ENCODE measurements at regions of chr1 and their contacts with region 1.

Region 1: DNA sequence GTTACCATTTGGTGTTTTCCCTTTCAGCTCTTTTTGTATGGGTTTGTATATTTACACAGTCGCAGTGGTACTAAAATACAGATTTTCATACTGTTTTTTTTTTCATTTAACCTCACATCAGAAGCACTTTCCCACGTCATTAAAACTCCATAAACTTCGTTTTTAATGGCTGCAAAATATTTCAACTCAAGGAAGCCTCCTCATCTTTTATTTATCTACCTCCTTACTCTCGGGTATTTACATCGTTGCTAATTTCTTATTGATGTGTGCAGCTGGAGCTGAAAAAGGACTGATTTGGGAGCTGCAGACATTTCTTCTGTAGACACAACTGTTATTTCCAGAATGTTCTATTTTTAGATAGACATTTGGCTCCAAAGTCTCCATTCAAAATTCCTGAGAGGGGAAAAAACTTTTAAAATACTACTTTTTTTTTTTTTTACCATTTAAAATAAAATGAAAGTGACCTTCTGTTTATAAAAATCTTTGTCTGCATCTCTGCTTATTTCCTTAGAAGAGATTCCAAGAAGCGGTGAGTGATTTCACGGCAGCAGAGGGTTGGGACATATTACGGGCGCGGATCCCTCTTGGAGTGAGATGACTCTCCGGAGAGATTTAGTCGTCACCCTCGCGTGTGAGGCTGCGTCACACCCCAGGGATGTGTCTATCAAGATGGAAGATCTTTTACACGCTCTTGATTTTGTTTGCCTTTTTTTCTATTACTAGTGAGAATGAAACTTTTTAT is 10.1 kb downstream of the RUNX3 start:
- DNase-seq: peak; percentile 32
- H3K4me3 Mint-ChIP-seq: no peak overlapping the region
- H3K27ac Mint-ChIP-seq: peak overlapping the region; percentile 94
- H3K4me1 Mint-ChIP-seq: peaks cover 40% of the 10 kb centered on the region
- H3K27me3 Mint-ChIP-seq: no peaks in the 10 kb centered on the region

Region 2: GRCh38 chr1:24888971-24889676 is 30.8 kb before region 1 on chr1:
- intact Hi-C with region 1: no loop called
- DNase-seq: no peak
- H3K4me3 Mint-ChIP-seq: no peak overlapping the region
- H3K27ac Mint-ChIP-seq: no peak overlapping the region
- H3K4me1 Mint-ChIP-seq: no peaks in the 10 kb centered on the region
- H3K27me3 Mint-ChIP-seq: peaks cover 20% of the 10 kb centered on the region

Region 3: GRCh38 chr1:25099343-25099951 is 179.5 kb after region 1 on chr1:
- intact Hi-C with region 1: loop called (anchors 2 kb)
- DNase-seq: peak; percentile 36
- H3K4me3 Mint-ChIP-seq: peak overlapping the region; percentile 68
- H3K27ac Mint-ChIP-seq: peak overlapping the region; percentile 67
- H3K4me1 Mint-ChIP-seq: peaks cover 66% of the 10 kb centered on the region
- H3K27me3 Mint-ChIP-seq: peaks cover 5% of the 10 kb centered on the region

Measured in activated T-helper 2 cell treated with anti-CD3 and anti-CD28 coated beads, Interferon-gamma antibody, Interleukin-2, Interleukin-4, amounts not matched to agents 10 μg/mL and 5 μg/mL and 100 μg/mL, durations not matched to agents 14 hours and 24 hours and 36 hours (primary cell).